GM13977 (cell line): ENCODE measurements at regions of chr10 and their contacts with region 1.

Region 1: DNA sequence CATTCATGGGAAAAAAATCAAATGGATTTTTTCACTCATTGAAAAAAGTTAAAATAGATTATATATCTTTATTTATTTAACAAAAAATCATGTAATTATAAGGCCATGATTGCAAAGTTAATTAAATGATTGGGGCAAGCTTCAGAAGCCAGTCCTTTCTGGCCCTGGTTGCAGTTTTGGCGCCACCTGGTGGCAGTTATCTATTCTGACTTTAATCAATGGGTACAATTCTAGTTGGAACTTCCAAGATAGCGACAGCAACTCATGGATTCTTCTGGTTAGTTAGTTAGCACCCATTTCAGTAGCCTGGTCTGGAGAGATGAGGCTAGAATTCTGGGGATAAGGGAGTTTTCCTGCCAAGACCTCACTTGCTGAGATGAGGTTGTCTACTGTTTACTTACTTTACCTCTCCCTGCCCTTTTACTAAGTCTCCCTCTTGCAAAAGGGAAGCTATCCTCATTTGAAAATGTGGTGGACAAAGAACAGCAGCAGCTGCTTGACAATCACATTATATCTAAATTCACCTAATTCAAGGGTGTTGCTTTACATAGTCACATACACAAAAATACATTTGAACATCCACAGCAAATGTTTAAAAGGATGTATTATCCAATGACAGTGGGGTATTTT is 42.3 kb downstream of the NOC3L start:
- DNase-seq: peak; percentile 47
- CTCF ChIP-seq: peak; percentile 76

Region 2: GRCh38 chr10:93916257-93917063 is 403.9 kb before region 1 on chr10:
- in situ Hi-C with region 1: loop called (anchors 25 kb)
- DNase-seq: no peak
- CTCF ChIP-seq: peak; percentile 55